ENCODE measurements at regions of chr5 and their contacts with region 1.

Region 1: DNA sequence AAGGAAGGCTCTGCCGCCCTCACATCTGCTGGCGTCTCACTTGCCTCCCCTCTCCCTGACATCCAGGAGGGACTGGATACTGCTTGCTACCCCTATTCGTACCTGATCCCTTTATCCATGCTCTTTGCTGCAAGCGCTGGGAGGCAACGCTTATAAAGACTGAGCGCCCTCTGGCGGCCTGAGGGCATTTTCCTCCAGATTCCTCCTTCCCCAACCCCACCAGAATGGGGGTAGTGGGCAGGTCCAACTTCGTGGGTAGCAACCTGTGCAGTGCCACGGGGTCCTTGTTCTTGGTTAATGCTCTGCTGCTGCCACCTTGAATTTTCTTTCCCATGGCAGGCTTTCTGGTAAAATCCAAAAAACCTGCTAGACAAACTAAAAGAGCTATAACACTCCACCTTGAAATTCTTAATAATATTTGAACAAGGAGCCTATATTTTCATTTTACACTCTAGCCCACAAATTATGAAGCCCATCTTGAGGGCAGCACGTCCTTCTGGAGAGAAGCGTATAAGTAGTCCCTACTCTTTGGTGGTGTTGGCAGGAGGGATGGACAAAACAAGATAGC is 52.4 kb downstream of the JADE2 start:
- DNase-seq: peak in 1 of 2 experiments; percentile 69
- H3K4me3 ChIP-seq: no peak overlapping the region
- H3K27ac ChIP-seq: no peak overlapping the region
- H3K4me1 ChIP-seq: no peaks in the 10 kb centered on the region
- H3K27me3 ChIP-seq: no peaks in the 10 kb centered on the region
- CTCF ChIP-seq: peak; percentile 84

Region 2: GRCh38 chr5:134296213-134296612 is 281.7 kb before region 1 on chr5:
- CTCF ChIA-PET with region 1: no interaction called
- POLR2A ChIA-PET with region 1: no interaction called
- intact Hi-C with region 1: loop called (anchors 1 kb)
- DNase-seq: no peak
- H3K4me3 ChIP-seq: no peak overlapping the region
- H3K27ac ChIP-seq: no peak overlapping the region
- H3K4me1 ChIP-seq: no peaks in the 10 kb centered on the region
- H3K27me3 ChIP-seq: no peaks in the 10 kb centered on the region
- CTCF ChIP-seq: no peak

Region 3: GRCh38 chr5:134411546-134412266 is 166.2 kb before region 1 on chr5 and contains the start of gene CDKN2AIPNL:
- CTCF ChIA-PET with region 1: no interaction called
- POLR2A ChIA-PET with region 1: no interaction called
- intact Hi-C with region 1: loop called (anchors 2 kb)
- DNase-seq: peak; percentile 65 to 89
- H3K4me3 ChIP-seq: peak within 1 kb of the TSS; percentile 98
- H3K27ac ChIP-seq: no peak within 1 kb of the TSS
- H3K4me1 ChIP-seq: peaks cover 16% of the 10 kb centered on the region
- H3K27me3 ChIP-seq: no peaks in the 10 kb centered on the region
- CTCF ChIP-seq: peak; percentile 60
- total RNA-seq, gene CDKN2AIPNL: 35.3 and 36.1 TPM in 2 replicates

Measured in PC-9 (cell line).